Panc1 (cell line): ENCODE measurements at regions of chr14 and their contacts with region 1.

Region 1: GRCh38 chr14:102063091-102063802 is 23.6 kb downstream of the HSP90AA1 start:
- DNase-seq: peak; percentile 53
- ATAC-seq: peak; percentile 95
- H3K4me3 ChIP-seq: no peak overlapping the region
- H3K27ac ChIP-seq: no peak overlapping the region
- H3K4me1 ChIP-seq: no peaks in the 10 kb centered on the region
- H3K27me3 ChIP-seq: no peaks in the 10 kb centered on the region
- CTCF ChIP-seq: no peak

Region 2: GRCh38 chr14:102096214-102097114 is 33.2 kb after region 1 on chr14:
- CTCF ChIA-PET with region 1: interaction called, 15 read pairs
- POLR2A ChIA-PET with region 1: interaction called, 8 read pairs
- in situ Hi-C with region 1: no loop called
- intact Hi-C with region 1: no loop called
- DNase-seq: peak; percentile 36
- ATAC-seq: peak; percentile 83
- H3K4me3 ChIP-seq: no peak overlapping the region
- H3K27ac ChIP-seq: no peak overlapping the region
- H3K4me1 ChIP-seq: peaks cover 4% of the 10 kb centered on the region
- H3K27me3 ChIP-seq: no peaks in the 10 kb centered on the region
- CTCF ChIP-seq: peak; percentile 85

Region 3: GRCh38 chr14:102304611-102305509 is 241.6 kb after region 1 on chr14 and contains the start of gene MOK:
- CTCF ChIA-PET with region 1: no interaction called
- POLR2A ChIA-PET with region 1: interaction called, 21 read pairs
- in situ Hi-C with region 1: no loop called
- intact Hi-C with region 1: no loop called
- DNase-seq: peak; percentile 86
- ATAC-seq: peak; percentile 98
- H3K4me3 ChIP-seq: peak within 1 kb of the TSS; percentile 70 to 82
- H3K27ac ChIP-seq: peak within 1 kb of the TSS; percentile 74
- H3K4me1 ChIP-seq: peaks cover 3% of the 10 kb centered on the region; the same call in 1 of the 2 replicates
- H3K27me3 ChIP-seq: no peaks in the 10 kb centered on the region
- CTCF ChIP-seq: no peak
- total RNA-seq, gene MOK: 9.8 TPM

Region 4: GRCh38 chr14:102333795-102334705 is 270.8 kb after region 1 on chr14:
- CTCF ChIA-PET with region 1: interaction called, 10 read pairs
- POLR2A ChIA-PET with region 1: no interaction called
- in situ Hi-C with region 1: no loop called
- intact Hi-C with region 1: no loop called
- DNase-seq: no peak
- ATAC-seq: no peak
- H3K4me3 ChIP-seq: no peak overlapping the region
- H3K27ac ChIP-seq: no peak overlapping the region
- H3K4me1 ChIP-seq: no peaks in the 10 kb centered on the region
- H3K27me3 ChIP-seq: no peaks in the 10 kb centered on the region
- CTCF ChIP-seq: no peak

Region 5: DNA sequence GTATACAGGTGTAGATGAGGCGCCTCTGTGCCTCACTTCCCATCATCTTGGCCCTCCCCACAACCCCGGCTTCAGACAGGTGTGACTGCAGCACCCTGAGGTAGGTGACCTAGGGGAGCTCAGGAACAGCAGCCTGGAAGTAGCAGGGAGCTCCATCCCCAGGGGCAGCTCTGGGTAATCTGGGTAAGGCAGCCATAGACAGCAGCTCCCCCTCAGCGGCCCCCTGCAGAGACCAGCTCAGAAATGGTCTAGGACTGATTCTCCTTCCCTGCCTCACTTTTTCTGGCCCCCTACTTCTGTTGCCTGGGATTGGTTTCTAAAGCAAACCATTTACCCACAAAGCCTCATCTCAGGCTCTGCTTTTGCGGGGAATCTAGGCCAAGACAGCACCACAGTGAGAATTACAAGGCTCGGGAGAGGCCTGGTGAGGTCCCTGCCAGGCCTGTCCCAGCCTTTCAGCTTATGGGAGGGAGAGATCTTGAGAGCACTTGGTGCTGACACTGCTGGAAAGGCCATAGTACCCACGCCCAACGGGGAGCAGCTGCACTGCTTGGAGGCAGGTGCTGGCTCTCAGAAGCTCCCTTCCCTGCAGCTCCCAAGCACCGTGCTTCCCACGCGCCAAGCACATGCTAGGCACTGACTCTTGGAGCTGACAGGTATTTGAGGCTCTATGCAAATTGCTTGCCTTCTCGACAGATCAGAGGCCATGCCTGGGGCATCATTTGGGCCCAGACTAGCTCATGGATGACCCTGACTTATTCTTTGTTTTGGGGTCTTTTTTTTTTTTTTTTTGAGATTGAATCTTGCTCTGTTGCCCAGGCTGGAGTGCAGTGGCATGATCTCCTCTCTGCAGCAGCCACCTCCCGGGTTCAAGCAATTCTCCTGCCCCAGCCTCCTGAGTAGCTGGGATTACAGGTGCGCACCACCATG is 668.9 kb after region 1 on chr14:
- CTCF ChIA-PET with region 1: no interaction called
- POLR2A ChIA-PET with region 1: no interaction called
- in situ Hi-C with region 1: no loop called
- intact Hi-C with region 1: no loop called
- DNase-seq: no peak
- ATAC-seq: 0 out of 2 replicates have a peak, but pooled peaks have one; percentile 34
- H3K4me3 ChIP-seq: no peak overlapping the region
- H3K27ac ChIP-seq: no peak overlapping the region
- H3K4me1 ChIP-seq: no peaks in the 10 kb centered on the region
- H3K27me3 ChIP-seq: no peaks in the 10 kb centered on the region
- CTCF ChIP-seq: no peak